Pancreas (tissue), 10 donors: ENCODE measurements at regions of chr17 and their contacts with region 1.

Region 1: DNA sequence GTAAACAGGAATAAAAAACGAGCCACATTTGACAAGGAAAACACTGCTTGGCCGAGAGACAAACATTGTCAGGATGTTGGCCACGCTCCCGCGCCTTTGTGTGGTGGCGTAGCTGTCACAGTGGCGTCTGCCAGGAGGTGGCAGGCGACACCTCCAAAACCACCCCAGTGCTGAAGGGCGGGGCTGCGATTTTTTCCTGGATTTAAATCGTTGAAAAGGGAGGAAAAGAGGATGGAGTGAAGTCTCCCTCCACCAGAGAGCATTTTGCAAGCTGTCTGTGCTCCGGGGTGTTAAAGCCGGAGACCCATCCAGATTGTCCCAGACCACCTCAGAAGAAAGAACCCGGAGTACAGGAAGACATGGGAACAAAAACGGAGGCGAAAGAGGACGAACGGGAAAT is 12.7 kb downstream of the MRM3 start:
- DNase-seq: peak; percentile 91 to 96 (median 93)
- ATAC-seq: peak; percentile 87 to 94 (median 94)
- H3K4me3 ChIP-seq: peak overlapping the region in 2 of 4 donors; percentile 11 to 38
- H3K27ac ChIP-seq: peak overlapping the region; percentile 49 to 85 (median 57)
- H3K4me1 ChIP-seq: peaks cover 5 to 17% (median 9%) of the 10 kb centered on the region in 3 donors
- H3K27me3 ChIP-seq: no peaks in the 10 kb centered on the region
- CTCF ChIP-seq: peak; percentile 69 to 75 (median 73)

Region 2: GRCh38 chr17:879549-880442 is 84.9 kb after region 1 on chr17:
- intact Hi-C with region 1: loop called in 1 of 3 experiments (anchors 10 kb)
- DNase-seq: peak; percentile 80 to 96 (median 94)
- ATAC-seq: peak; percentile 68 to 80 (median 76)
- H3K4me3 ChIP-seq: no peak overlapping the region
- H3K27ac ChIP-seq: peak overlapping the region; percentile 33 to 88 (median 76)
- H3K4me1 ChIP-seq: peaks cover 32 to 45% (median 37%) of the 10 kb centered on the region in 3 donors
- H3K27me3 ChIP-seq: no peaks in the 10 kb centered on the region
- CTCF ChIP-seq: peak; percentile 49 to 68 (median 62)

Region 3: GRCh38 chr17:979538-980405 is 184.9 kb after region 1 on chr17 and contains the start of gene NXN:
- intact Hi-C with region 1: loop called (anchors 5 to 10 kb)
- DNase-seq: peak; percentile 76 to 100 (median 92)
- ATAC-seq: peak; percentile 85 to 93 (median 89)
- H3K4me3 ChIP-seq: peak within 1 kb of the TSS; percentile 69 to 87 (median 72)
- H3K27ac ChIP-seq: peak within 1 kb of the TSS; percentile 68 to 85 (median 74)
- H3K4me1 ChIP-seq: peaks cover 0 to 27% (median 2%) of the 10 kb centered on the region in 3 donors
- H3K27me3 ChIP-seq: no peaks in the 10 kb centered on the region
- CTCF ChIP-seq: no peak
- total RNA-seq, gene NXN: 25.2 to 35.0 (median 30.7) TPM